HepG2 (cell line): ENCODE measurements at regions of chrX and their contacts with region 1.

Region 1: GRCh38 chrX:139559383-139560042 is 29.0 kb downstream of the F9 start:
- DNase-seq: peak; percentile 36
- ATAC-seq: peak; percentile 71
- H3K4me3 ChIP-seq: no peak overlapping the region
- H3K27ac ChIP-seq: no peak overlapping the region
- H3K4me1 ChIP-seq: no peaks in the 10 kb centered on the region
- H3K27me3 ChIP-seq: no peaks in the 10 kb centered on the region
- CTCF ChIP-seq: peak; percentile 58
- EP300 ChIP-seq: no peak
- POLR2A ChIP-seq: no peak
- RAD21 ChIP-seq: no peak

Region 2: GRCh38 chrX:138775517-138775916 is 784.0 kb before region 1 on chrX:
- CTCF ChIA-PET with region 1: interaction called, 7 read pairs
- POLR2A ChIA-PET with region 1: no interaction called
- in situ Hi-C with region 1: loop called (anchors 10 kb)
- intact Hi-C with region 1: no loop called
- DNase-seq: peak; percentile 0
- ATAC-seq: no peak
- H3K4me3 ChIP-seq: no peak overlapping the region
- H3K27ac ChIP-seq: no peak overlapping the region
- H3K4me1 ChIP-seq: no peaks in the 10 kb centered on the region
- H3K27me3 ChIP-seq: no peaks in the 10 kb centered on the region
- CTCF ChIP-seq: peak; percentile 34; the same call in 1 of the 2 replicates
- EP300 ChIP-seq: no peak
- POLR2A ChIP-seq: no peak
- RAD21 ChIP-seq: no peak

Region 3: GRCh38 chrX:139126493-139126892 is 433.0 kb before region 1 on chrX:
- CTCF ChIA-PET with region 1: interaction called, 3 read pairs
- POLR2A ChIA-PET with region 1: no interaction called
- in situ Hi-C with region 1: no loop called
- intact Hi-C with region 1: loop called (anchors 1 kb)
- DNase-seq: peak; percentile 12
- ATAC-seq: peak; percentile 86
- H3K4me3 ChIP-seq: no peak overlapping the region
- H3K27ac ChIP-seq: no peak overlapping the region
- H3K4me1 ChIP-seq: no peaks in the 10 kb centered on the region
- H3K27me3 ChIP-seq: no peaks in the 10 kb centered on the region
- CTCF ChIP-seq: peak; percentile 28; the same call in 1 of the 2 replicates
- EP300 ChIP-seq: no peak
- POLR2A ChIP-seq: no peak
- RAD21 ChIP-seq: no peak